ENCODE measurements at regions of chr3 and their contacts with region 1.

Region 1: DNA sequence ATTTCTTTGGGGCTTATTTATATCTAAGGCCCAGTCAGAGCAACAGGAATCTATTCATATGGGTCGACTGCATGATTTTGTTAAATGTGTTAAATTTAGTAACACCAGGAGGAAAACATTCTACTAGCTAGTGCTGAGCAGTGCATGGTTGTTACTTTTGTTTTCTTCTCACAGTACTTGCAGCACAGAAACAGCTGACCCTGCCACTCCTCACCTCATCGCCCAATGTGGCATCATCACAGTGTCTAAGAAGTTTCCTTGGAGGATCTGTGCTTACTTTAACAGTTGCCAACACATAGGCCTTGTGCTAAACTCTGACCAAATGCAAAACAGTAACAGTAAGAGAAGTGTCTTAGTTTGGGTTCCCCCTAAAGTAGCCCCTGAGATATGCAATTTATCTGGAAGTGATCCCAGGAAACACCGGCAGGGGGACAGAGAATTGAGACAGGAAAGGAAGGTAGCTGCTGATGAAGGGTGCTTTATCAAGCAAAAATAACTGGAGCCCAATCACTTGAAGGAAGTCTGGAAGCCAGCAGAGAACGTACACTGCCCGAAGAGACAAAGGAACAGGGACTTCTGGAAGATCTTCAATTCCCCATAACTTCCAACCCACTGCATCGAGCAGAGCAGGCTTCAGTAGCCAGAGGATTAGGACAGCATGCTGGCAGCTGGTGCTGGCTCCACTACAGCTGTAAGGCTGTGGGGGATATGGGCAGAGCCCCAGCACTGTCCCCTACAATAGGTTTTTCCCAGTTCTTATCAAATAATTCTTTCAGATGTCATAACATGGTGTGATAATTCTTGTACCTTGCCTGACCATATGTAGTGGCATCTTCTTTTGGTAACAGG is 36.0 kb upstream of the ULK4 start:
- DNase-seq: peak; percentile 40
- ATAC-seq: peak; percentile 90
- H3K4me3 Mint-ChIP-seq: no peak overlapping the region
- H3K27ac Mint-ChIP-seq: no peak overlapping the region
- H3K4me1 Mint-ChIP-seq: peaks cover 5% of the 10 kb centered on the region
- H3K27me3 Mint-ChIP-seq: peaks cover 2% of the 10 kb centered on the region; the same call in 1 of the 2 replicates
- CTCF ChIP-seq: no peak

Region 2: DNA sequence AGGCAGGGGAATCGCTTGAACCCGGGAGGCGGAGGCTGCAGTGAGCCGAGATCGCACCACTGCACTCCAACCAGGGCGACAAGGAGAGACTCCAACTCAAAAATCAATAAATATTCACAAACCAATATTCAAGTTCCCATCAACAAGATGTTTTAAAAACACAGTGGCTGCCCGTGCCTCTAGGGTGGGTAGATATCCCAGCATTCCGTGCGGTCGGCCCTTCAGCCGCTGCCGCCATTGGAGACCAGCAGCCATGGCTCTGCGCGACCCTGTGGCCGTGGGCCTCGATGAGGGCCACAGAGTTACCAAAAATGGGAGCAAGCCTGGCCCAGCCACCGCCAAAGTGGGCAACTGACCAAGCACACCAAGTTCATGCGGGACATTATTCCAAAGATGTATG is 42.7 kb before region 1 on chr3:
- CTCF ChIA-PET with region 1: no interaction called
- POLR2A ChIA-PET with region 1: no interaction called
- DNase-seq: no peak
- ATAC-seq: no peak
- H3K4me3 Mint-ChIP-seq: no peak overlapping the region
- H3K27ac Mint-ChIP-seq: no peak overlapping the region
- H3K4me1 Mint-ChIP-seq: 0 out of 2 replicates have a peak, but pooled peaks cover 3% of the 10 kb centered on the region
- H3K27me3 Mint-ChIP-seq: no peaks in the 10 kb centered on the region
- CTCF ChIP-seq: no peak

Region 3: DNA sequence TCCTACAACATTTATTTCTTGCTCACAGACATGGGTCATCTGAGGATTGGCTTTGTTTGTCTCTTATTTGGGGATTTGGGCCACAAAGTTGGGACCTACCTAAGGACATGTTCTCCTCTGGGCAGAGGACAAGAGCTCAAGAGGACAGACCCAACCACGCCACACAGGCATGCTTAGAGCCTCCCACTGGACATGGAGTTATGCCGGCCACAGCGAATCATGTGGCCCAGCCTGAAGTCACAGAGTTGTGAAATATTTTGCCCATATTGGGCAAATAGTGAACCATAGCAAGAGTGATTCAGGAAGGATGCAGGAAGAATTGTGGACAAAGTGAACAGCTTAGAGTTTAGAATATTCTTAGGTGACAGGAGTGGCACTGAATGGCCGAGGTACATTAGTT is 103.1 kb after region 1 on chr3:
- CTCF ChIA-PET with region 1: interaction called, 46 read pairs
- POLR2A ChIA-PET with region 1: no interaction called
- DNase-seq: no peak
- ATAC-seq: no peak
- H3K4me3 Mint-ChIP-seq: no peak overlapping the region
- H3K27ac Mint-ChIP-seq: peak overlapping the region; percentile 26; the same call in 1 of the 2 replicates
- H3K4me1 Mint-ChIP-seq: peaks cover 35% of the 10 kb centered on the region
- H3K27me3 Mint-ChIP-seq: no peaks in the 10 kb centered on the region
- CTCF ChIP-seq: no peak; the same call in 1 of the 2 replicates